ENCODE measurements at regions of chr5 and their contacts with region 1.

Region 1: DNA sequence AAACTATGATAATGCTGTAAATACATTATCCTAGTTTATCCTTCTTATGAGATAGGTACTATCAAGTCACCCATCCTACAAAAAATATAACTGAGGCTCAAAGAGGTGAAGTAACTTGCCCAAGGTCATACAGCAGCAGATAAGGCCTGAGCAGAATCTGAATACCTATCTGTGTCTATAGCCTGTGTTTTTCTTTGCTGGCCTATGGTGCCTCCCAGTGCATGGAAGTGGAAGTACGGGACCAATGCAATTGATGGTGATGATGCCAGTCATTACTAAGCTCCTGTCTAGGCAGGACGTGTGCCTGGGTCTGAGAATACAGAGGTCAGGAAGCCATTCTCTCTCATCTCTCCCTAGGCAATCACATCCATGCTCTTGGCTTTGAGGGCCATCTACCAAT is 67.8 kb downstream of the FAT2 start:
- DNase-seq: no peak
- H3K4me3 ChIP-seq: no peak overlapping the region
- CTCF ChIP-seq: peak; percentile 52

Region 2: DNA sequence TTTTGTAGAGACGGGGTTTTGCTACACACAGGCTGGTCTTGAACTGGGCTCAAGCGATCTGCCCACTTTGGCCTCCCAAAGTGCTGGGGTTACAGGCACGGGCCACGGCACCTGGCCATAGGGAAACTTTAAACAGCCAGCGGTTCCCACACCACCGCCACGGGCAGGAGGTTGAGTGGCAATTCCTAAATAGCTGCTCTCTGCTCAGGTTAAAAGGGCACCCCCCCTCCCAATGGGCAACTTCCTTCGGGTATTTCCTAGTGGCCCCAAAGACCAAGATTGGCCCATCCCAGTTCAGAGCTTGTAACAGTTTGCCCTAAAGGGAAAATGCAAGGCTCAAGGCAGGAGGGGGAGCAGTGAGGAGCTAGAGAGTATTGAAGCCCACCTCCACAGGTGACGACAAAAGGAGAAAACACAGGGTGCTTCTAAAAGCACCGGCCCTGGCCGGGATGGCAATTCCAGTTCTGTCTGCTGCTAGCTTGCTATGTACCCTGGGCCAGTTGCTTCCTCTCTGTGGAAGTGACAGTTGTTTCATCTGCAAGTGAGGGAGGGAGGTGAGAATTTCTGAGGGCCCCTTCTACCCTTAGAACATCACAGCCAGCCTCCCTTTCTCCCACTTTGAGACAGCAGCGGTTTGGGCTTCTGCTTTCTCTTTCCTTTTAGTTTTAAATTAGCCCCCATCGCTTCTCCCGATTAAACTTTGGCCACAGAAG is 425.4 kb before region 1 on chr5:
- CTCF ChIA-PET with region 1: no interaction called
- POLR2A ChIA-PET with region 1: no interaction called
- DNase-seq: no peak
- H3K4me3 ChIP-seq: no peak overlapping the region
- CTCF ChIP-seq: no peak

Region 3: DNA sequence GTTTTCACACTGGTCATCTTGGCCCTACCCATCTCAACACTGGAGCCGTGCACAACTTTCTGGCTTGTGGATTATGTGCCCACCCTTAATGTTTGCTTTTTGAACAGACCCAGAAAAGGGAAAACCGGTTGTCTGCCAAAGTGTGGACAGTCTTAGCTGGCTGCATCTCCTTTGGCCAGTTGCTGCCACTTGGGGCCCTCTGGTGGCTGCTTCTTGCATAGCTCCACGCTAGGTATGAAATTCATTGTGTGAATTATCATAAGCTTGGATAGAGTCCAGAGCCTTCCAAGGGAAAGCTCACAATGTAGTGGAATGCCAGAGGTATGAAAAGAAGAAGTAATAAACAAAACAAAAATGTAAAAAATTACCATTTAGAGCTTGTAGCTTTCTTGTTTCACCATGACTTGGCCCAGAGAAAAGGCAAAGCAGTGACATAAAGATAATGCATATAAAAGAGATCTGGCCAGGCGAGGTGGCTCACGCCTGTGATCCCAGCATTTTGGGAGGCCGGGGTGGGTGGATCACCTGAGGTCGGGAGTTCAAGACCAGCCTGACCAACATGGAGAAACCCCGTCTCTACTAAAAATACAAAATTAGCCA is 207.2 kb before region 1 on chr5:
- CTCF ChIA-PET with region 1: interaction called, 12 read pairs
- POLR2A ChIA-PET with region 1: no interaction called
- DNase-seq: peak; percentile 5
- H3K4me3 ChIP-seq: no peak overlapping the region
- CTCF ChIP-seq: peak; percentile 80

Region 4: GRCh38 chr5:151492729-151493128 is 30.6 kb before region 1 on chr5:
- CTCF ChIA-PET with region 1: no interaction called
- POLR2A ChIA-PET with region 1: no interaction called
- DNase-seq: peak; percentile 36
- H3K4me3 ChIP-seq: no peak overlapping the region
- CTCF ChIP-seq: no peak

Region 5: DNA sequence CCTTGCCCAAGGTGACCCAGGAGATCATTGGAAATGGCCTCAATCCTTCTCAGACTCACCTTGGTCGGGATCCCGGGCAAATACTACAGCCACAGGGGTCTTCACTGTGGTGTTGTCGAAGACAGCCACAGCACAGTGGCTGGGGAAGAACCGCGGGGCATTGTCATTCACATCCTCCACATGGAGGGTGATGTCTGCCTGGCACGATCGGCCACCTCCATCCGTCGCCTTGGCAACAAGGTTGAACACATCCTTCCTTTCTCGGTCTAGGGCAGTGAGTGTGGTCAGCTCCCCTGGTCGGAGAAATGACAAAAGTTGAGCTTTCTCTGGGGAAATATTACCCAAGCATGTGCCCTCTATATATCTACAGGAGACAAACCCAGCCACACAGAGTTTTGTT is 11.0 kb after region 1 on chr5:
- CTCF ChIA-PET with region 1: interaction called, 12 read pairs
- POLR2A ChIA-PET with region 1: no interaction called
- DNase-seq: no peak
- H3K4me3 ChIP-seq: no peak overlapping the region
- CTCF ChIP-seq: no peak